ENCODE measurements at regions of chr1 and their contacts with region 1.

Region 1: GRCh38 chr1:181424786-181425403 is 58.4 kb upstream of the CACNA1E start:
- DNase-seq: peak; percentile 14 to 69 (median 35)
- H3K4me3 ChIP-seq: no peak overlapping the region
- H3K27ac ChIP-seq: no peak overlapping the region
- H3K4me1 ChIP-seq: no peaks in the 10 kb centered on the region
- H3K27me3 ChIP-seq: no peaks in the 10 kb centered on the region
- CTCF ChIP-seq: peak in 2 of 3 donors; percentile 16 to 46
- EP300 ChIP-seq: no peak
- POLR2A ChIP-seq: no peak

Region 2: GRCh38 chr1:181189691-181190363 is 235.1 kb before region 1 on chr1:
- intact Hi-C with region 1: loop called in 2 of 4 experiments (anchors 5 to 10 kb)
- DNase-seq: peak in 4 of 5 donors; percentile 19 to 75 (median 52)
- H3K4me3 ChIP-seq: peak overlapping the region; percentile 23
- H3K27ac ChIP-seq: no peak overlapping the region
- H3K4me1 ChIP-seq: peaks cover 1% of the 10 kb centered on the region
- H3K27me3 ChIP-seq: no peaks in the 10 kb centered on the region
- CTCF ChIP-seq: peak; percentile 29 to 66 (median 44)
- EP300 ChIP-seq: no peak
- POLR2A ChIP-seq: no peak

Measured in ovary (tissue), 10 donors.